Activated B cell treated with CpG ODN at 0.5 μM for 24 hours (primary cell): ENCODE measurements at regions of chr1 and their contacts with region 1.

Region 1: GRCh38 chr1:212012034-212012740 is 23.2 kb downstream of the INTS7 start:
- DNase-seq: no peak
- ATAC-seq: peak; percentile 99
- H3K4me3 Mint-ChIP-seq: no peak overlapping the region
- H3K27ac Mint-ChIP-seq: no peak overlapping the region
- H3K4me1 Mint-ChIP-seq: no peaks in the 10 kb centered on the region
- H3K27me3 Mint-ChIP-seq: no peaks in the 10 kb centered on the region
- CTCF ChIP-seq: peak; percentile 64

Region 2: DNA sequence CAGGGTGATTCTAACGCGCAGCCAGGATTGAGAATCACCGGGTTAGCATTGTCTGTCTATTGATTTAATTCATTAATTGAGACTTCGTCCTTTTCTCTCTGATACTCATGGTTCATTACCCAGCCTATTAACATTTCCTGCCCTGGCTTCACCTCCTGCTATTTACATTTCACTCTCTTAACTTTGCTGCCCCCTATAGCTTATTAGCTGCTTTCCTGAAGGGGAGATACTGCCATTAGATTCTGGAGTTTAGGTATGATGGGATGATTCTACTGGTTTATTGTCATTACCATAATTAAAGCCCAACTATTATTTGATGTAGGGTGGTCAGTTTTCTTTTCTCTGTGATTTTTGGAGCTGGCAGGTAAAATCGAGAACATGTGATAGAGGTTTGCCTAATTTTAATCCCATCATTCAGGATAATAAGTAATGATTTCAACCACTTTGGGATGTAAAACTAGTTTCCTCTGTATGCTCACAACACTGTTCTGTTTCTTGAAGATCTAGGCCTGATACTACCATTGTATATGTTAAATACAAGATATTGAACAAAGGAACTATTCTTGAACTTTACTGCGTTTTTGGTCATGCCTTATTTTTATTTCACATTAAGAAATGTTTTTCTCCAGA is 279.4 kb after region 1 on chr1:
- CTCF ChIA-PET with region 1: no interaction called
- POLR2A ChIA-PET with region 1: no interaction called
- intact Hi-C with region 1: loop called (anchors 1 kb)
- DNase-seq: no peak
- ATAC-seq: peak; percentile 91
- H3K4me3 Mint-ChIP-seq: peak overlapping the region; percentile 2
- H3K27ac Mint-ChIP-seq: no peak overlapping the region
- H3K4me1 Mint-ChIP-seq: peaks cover 78% of the 10 kb centered on the region
- H3K27me3 Mint-ChIP-seq: no peaks in the 10 kb centered on the region
- CTCF ChIP-seq: peak; percentile 44

Region 3: GRCh38 chr1:212368073-212368484 is 355.9 kb after region 1 on chr1:
- CTCF ChIA-PET with region 1: interaction called, 7 read pairs
- POLR2A ChIA-PET with region 1: no interaction called
- intact Hi-C with region 1: loop called (anchors 1 kb)
- DNase-seq: no peak
- ATAC-seq: peak; percentile 89
- H3K4me3 Mint-ChIP-seq: no peak overlapping the region
- H3K27ac Mint-ChIP-seq: no peak overlapping the region
- H3K4me1 Mint-ChIP-seq: no peaks in the 10 kb centered on the region
- H3K27me3 Mint-ChIP-seq: no peaks in the 10 kb centered on the region
- CTCF ChIP-seq: peak; percentile 25